Body of pancreas (tissue), 4 donors: ENCODE measurements at regions of chr11 and their contacts with region 1.

Region 1: GRCh38 chr11:64894797-64895452 is 16.5 kb upstream of the EHD1 start:
- DNase-seq: no peak
- ATAC-seq: no peak
- H3K4me3 ChIP-seq: no peak overlapping the region
- H3K27ac ChIP-seq: peak overlapping the region in 1 of 4 donors; percentile 84
- H3K4me1 ChIP-seq: peaks cover 47% of the 10 kb centered on the region
- H3K27me3 ChIP-seq: no peaks in the 10 kb centered on the region
- CTCF ChIP-seq: no peak
- POLR2A ChIP-seq: no peak

Region 2: DNA sequence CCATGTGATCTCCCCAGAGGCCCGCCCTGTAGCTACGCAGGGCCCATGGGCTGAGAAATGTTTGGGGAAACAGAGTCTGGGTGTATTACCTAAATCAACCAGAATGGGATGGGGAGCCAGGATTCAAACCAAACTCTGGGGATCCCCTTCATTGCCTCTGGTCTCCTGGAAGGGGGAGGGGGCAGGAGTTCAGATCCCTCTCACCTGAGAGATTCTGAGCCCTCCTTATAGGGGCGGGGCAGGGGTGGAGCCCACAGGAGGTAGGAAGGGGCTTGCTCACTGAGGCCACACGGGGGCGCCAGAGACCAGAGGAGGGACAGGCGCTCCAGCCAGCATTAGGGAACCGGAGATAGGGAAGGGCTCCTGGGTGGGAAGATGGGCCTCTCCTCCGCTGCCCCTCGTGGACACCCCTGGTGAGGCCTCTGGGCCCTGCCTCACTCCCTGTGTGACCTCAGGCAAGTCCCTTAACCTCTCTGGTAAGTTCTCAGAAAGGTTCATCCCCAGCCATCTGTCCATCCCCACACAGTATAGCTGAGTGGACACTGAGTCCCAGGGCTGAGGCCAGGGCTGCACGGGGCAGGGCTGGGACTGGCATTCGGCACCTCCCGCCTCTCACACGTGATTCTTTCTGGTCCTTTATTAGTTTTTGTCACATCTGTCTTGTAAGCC is 47.8 kb before region 1 on chr11:
- intact Hi-C with region 1: loop called (anchors 5 kb)
- DNase-seq: peak; percentile 92 to 94 (median 93)
- ATAC-seq: peak; percentile 58
- H3K4me3 ChIP-seq: no peak overlapping the region
- H3K27ac ChIP-seq: peak overlapping the region in 1 of 4 donors; percentile 58
- H3K4me1 ChIP-seq: peaks cover 46% of the 10 kb centered on the region
- H3K27me3 ChIP-seq: no peaks in the 10 kb centered on the region
- CTCF ChIP-seq: peak; percentile 95 to 99 (median 98)
- POLR2A ChIP-seq: no peak